Colonic mucosa (tissue), 4 donors: ENCODE measurements at regions of chr18 and their contacts with region 1.

Region 1: DNA sequence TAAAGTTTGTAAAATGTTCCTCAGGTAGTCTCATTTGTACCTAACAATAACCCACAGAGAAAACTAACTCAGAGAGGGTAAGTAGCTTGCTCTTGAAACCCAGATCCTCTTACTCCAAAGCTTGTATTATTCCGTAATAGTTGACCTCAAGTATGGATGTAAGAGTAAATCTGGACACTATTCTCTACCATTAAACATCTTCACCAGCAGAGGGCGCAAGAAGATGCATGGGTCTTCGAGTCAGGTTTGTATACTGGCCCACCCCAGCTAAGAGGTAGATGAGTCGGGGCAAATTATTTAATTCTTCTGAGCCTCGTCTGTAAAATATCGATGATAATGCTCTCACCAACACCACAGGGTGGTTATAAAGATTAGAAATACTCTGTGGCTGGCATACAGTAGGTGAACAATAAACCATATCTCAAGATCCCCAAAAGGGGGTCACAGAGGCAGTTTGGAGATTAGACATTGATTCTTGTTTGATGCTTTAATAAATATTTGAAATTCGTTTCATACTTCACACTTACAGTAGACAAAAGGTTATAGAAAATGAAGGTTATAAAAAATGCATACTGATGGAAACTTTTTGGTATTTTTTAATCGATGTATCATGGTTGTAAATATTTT is 3.5 kb upstream of the CABLES1 start:
- DNase-seq: peak; percentile 79
- H3K4me3 ChIP-seq: no peak overlapping the region
- H3K27ac ChIP-seq: no peak overlapping the region
- H3K4me1 ChIP-seq: peaks cover 10% of the 10 kb centered on the region
- H3K27me3 ChIP-seq: no peaks in the 10 kb centered on the region
- CTCF ChIP-seq: peak; percentile 68

Region 2: DNA sequence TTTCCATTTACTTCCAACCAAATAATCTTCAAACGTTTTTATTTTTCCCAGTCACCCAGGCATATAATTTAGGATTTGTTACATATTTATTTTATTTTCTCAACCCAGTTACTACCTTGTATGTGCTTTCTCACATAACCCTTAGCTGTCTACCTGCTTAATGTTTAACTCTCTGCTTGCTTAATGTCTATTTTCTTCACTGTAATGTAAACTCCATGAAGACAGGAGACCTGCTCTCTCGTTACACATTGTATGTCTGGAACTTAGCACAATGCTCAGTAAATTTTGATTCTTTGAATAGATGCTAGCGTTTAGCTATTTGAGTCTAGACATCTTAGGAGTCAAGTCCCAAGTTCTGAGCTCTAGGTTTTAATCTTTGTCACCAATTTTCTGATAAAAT is 128.5 kb before region 1 on chr18:
- intact Hi-C with region 1: no loop called
- DNase-seq: no peak
- H3K4me3 ChIP-seq: no peak overlapping the region
- H3K27ac ChIP-seq: no peak overlapping the region
- H3K4me1 ChIP-seq: no peaks in the 10 kb centered on the region
- H3K27me3 ChIP-seq: no peaks in the 10 kb centered on the region
- CTCF ChIP-seq: no peak

Region 3: DNA sequence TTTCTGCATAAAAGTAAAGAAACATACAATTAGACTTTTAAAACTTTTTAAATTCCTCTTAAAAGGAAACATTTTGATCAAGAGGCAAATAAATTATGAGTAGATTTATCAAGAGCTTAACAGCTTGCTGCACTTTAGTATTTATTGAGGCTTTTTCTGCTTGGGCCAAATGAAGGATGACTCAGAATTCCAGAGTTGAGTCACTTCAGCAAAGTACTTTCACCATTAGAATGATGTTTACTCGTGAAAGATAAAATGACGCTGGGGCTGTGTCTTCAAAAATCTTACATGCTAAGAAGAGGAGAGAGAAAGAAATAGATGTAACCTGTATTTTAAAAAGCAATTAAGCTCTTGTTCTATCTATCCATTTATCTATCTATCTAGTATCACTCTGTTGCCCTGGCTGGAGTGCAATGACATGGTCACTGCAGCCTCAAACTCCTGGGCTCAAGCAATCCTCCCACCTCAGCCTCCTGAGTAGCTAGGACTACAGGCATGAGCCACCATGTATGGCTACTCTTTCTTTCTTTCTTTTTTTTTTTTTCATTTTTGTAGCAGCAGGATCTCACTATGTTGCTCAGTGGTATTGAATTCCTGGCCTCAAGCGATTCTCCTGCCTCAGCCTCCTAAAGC is 246.0 kb after region 1 on chr18:
- intact Hi-C with region 1: loop called (anchors 1 kb)
- DNase-seq: no peak
- H3K4me3 ChIP-seq: no peak overlapping the region
- H3K27ac ChIP-seq: no peak overlapping the region
- H3K4me1 ChIP-seq: no peaks in the 10 kb centered on the region
- H3K27me3 ChIP-seq: no peaks in the 10 kb centered on the region
- CTCF ChIP-seq: no peak

Region 4: GRCh38 chr18:23383459-23383858 is 251.7 kb after region 1 on chr18:
- intact Hi-C with region 1: loop called (anchors 1 kb)
- DNase-seq: no peak
- H3K4me3 ChIP-seq: no peak overlapping the region
- H3K27ac ChIP-seq: no peak overlapping the region
- H3K4me1 ChIP-seq: no peaks in the 10 kb centered on the region
- H3K27me3 ChIP-seq: no peaks in the 10 kb centered on the region
- CTCF ChIP-seq: no peak